Posterior cingulate gyrus (tissue), 11 donors: ENCODE measurements at regions of chr1 and their contacts with region 1.

Region 1: DNA sequence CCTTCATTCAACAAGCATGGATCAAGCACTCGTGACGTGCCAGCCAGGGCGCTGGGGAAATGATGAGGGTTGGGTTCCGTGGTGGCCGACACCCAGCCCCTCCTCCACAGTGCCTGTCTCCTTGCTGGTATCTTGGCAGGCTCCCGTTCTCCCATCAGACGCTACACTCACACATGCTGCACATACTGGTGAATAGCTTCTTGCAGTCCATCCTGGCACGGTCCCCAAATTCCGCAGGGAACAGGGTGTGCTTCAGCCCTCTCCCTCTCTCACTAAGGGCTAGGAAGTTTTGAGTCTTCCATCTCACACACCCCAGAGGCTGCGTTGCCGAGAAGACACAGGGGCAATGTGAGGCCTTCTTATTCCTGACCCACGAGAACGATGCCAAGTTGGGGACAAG is 10.1 kb upstream of the MEF2D start:
- DNase-seq: peak; percentile 71 to 97 (median 84)

Region 2: DNA sequence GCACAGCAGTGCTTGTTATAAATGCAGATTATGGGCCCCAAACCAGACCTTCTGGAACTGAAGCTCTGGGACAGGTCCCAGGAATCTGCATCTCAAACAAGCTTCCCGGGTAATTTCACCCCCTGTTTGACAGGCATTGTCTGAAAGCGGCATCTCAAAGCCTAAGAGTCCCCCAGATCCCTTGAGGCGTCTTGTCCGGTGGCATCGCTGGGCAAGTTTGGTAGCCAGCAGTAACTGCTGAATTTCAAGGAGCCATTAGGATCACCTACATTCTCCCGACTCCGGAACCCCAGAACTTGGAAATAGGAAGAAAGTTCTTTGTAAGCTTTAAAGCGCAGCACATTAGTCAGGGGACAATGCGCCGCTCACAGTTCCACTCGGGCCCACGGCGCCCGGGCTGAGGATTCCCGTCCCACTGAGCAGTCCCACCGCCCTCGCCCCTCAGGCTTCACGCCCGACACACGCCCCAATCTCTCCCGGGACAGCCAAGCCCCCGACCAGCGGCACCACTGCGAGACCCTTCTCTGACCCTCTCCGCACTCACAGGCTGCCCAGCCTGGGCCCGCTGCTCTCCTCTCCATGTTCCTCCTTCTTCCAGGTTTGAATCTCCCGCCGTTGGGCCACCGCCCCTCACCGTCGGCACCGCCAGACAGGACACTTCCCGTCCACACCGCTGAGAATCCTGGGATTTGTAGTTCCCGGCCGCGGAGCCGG is 61.4 kb after region 1 on chr1 and contains the start of gene IQGAP3:
- intact Hi-C with region 1: loop called (anchors 5 kb)
- DNase-seq: peak; percentile 67 to 97 (median 82)